ENCODE measurements at regions of chr3 and their contacts with region 1.

Region 1: DNA sequence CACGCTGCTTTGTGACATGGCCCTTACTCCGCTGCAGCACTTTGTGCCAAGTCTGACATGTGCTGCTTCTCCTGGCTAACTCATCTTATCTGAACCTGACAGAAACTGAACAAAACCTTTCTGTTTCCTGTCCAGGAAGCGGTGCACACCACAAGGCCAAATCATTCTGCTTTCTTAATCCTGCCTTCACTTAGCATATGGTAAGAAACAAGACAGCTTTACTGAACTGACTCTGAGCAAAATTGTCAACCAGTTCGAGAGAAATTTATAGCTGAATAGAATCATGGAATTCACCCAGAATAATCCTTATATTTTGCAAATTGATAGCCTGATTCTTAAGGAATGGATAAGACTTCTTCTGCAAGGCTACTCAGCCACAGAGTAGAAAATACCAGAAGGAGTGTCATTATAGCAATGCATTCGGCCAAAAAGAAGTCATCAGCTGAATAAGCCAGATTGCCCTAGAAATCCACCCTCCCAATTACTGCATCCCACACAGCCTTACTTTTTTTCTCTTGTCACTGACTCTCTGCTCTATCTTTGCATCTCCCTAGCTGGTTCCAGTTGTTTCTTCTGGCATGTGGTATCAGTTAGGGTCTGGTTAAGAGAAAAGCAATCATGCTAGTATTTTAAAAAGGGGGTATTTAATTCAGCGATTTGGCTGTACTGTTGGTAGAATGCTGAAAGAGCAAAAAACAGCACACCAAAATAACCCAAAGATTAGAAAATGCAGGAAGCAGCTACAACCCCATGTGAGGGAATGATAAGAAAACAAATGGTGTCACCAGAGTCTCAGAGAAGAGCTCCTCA is 41.6 kb upstream of the STRIT1 start:
- DNase-seq: no peak
- CTCF ChIP-seq: no peak

Region 2: DNA sequence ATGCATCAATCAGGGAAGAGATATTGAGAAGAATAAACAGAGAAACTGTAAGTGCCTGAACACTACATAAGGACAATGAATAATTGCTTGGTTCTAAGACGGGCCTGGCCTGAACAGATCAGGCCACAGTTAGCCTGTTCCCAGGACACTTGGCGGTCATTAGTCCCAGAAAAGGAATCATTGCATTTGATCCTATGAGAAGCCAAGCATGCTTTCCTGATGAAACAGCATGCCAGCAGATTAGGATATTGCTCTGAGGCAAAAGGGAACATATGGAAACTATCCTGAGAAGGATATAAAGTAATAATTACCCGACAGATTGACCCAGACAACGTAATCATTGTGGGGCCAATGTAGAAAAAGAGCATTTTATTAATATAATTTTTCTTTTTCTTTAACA is 93.5 kb before region 1 on chr3:
- CTCF ChIA-PET with region 1: no interaction called
- POLR2A ChIA-PET with region 1: no interaction called
- DNase-seq: no peak
- CTCF ChIP-seq: no peak

Region 3: GRCh38 chr3:155262280-155262679 is 72.8 kb before region 1 on chr3:
- CTCF ChIA-PET with region 1: no interaction called
- POLR2A ChIA-PET with region 1: no interaction called
- DNase-seq: no peak
- CTCF ChIP-seq: no peak

Region 4: GRCh38 chr3:155308831-155309230 is 26.3 kb before region 1 on chr3:
- CTCF ChIA-PET with region 1: no interaction called
- POLR2A ChIA-PET with region 1: no interaction called
- DNase-seq: no peak
- CTCF ChIP-seq: no peak

Region 5: GRCh38 chr3:155323063-155323666 is 12.0 kb before region 1 on chr3:
- CTCF ChIA-PET with region 1: interaction called, 27 read pairs
- POLR2A ChIA-PET with region 1: no interaction called
- DNase-seq: peak; percentile 34
- CTCF ChIP-seq: peak; percentile 61

Region 6: DNA sequence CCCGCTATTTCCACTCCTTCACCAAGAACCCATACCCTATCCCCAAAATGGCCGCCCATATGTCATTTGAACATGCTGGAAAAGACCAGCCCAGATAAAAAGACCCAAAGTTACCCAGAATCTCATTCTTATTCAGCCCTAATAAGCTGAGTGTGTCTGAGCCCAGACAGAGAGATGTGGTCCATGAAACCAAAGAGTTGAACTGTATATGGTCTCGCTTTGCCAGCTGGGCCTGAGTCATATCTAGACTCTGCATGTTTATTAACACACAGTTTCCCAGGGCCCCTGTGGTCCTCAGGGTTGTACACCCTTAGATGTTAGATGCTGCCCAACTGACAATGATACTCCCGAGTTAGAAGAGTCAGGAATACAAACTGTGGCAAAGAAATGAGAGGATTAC is 160.3 kb after region 1 on chr3:
- CTCF ChIA-PET with region 1: no interaction called
- POLR2A ChIA-PET with region 1: no interaction called
- DNase-seq: no peak
- CTCF ChIP-seq: no peak